ENCODE measurements at regions of chr18 and their contacts with region 1.

Region 1: DNA sequence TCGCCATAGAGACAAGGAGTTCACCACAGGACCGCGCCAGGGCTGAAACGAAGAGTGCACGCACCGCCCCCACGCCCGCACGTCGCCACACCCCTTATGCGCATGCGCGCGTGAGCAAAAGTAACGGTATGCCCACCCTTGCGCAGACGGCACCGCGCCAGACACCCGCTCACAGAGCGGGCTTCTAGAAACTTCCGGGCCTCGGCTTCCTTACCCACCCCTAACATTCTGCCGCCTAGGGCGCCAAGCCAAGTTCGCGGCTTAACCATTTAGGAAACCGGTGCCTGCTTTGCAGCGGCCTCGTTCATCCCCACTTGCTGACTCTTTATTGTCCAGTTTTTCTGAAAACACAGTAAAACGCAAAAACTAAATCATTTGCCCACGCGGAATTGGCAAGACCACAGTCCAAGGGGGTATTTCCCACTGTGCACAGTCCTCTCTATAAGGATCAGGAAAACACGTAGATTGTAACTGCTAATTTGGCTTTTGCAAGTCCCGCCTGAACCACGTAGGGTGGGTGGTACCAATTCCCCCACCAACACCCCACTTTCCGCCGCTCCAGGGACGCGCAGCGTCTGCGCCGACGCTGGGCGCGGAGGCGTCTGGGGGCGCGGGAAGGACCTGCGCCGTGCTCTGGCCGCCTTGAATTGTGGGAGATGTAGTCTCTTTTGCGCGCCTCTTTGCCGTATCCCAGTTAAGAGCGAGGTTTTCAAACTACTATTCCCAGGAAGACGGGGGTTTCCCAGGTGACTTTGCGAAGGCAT is at the starts of genes FBXO15 and TIMM21:
- DNase-seq: peak; percentile 93 to 99
- ATAC-seq: peak; percentile 84 to 93 (median 85)
- H3K4me3 ChIP-seq: peak within 1 kb of the TSS; percentile 84
- H3K4me3 Mint-ChIP-seq: peak within 1 kb of the TSS; percentile 97
- H3K27ac ChIP-seq: peak within 1 kb of the TSS; percentile 96
- H3K27ac Mint-ChIP-seq: peak within 1 kb of the TSS; percentile 98 to 100
- H3K4me1 ChIP-seq: peaks cover 15% of the 10 kb centered on the region
- H3K4me1 Mint-ChIP-seq: peaks cover 36% of the 10 kb centered on the region in 2 donors
- H3K27me3 ChIP-seq: no peaks in the 10 kb centered on the region
- H3K27me3 Mint-ChIP-seq: peaks cover 6 to 7% of the 10 kb centered on the region in 2 donors
- CTCF ChIP-seq: no peak
- total RNA-seq, gene FBXO15: 0.50 to 2.6 (median 0.87) TPM
- total RNA-seq, gene TIMM21: 13.1 to 17.3 (median 16.1) TPM

Region 2: DNA sequence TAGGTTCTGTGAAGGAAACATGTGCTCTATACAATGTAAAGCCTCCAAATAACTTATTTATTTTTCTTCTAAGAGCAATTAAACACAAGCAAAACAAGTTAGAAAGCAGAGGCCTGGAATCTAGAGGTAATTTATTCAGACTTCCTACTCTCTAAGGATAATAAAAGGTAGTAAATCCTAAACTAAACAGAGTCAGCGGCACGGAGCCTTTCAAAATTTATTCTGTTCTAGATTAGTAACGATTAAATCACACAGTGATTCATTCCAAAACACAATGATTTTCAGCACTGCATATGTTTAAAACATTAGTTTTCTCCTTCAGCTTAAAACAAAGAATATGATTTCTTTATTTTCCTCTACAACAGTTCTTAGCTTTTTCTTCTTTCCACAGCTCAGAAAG is 161.2 kb before region 1 on chr18:
- intact Hi-C with region 1: no loop called
- DNase-seq: no peak
- ATAC-seq: no peak
- H3K4me3 ChIP-seq: no peak overlapping the region
- H3K4me3 Mint-ChIP-seq: no peak overlapping the region
- H3K27ac ChIP-seq: no peak overlapping the region
- H3K27ac Mint-ChIP-seq: no peak overlapping the region
- H3K4me1 ChIP-seq: no peaks in the 10 kb centered on the region
- H3K4me1 Mint-ChIP-seq: no peaks in the 10 kb centered on the region
- H3K27me3 ChIP-seq: no peaks in the 10 kb centered on the region
- H3K27me3 Mint-ChIP-seq: no peaks in the 10 kb centered on the region
- CTCF ChIP-seq: no peak

Region 3: GRCh38 chr18:74291771-74292540 is 144.0 kb after region 1 on chr18 and contains the start of gene CYB5A:
- intact Hi-C with region 1: loop called (anchors 1 kb)
- DNase-seq: peak; percentile 99 to 100
- ATAC-seq: peak; percentile 95 to 100 (median 96)
- H3K4me3 ChIP-seq: peak within 1 kb of the TSS; percentile 95
- H3K4me3 Mint-ChIP-seq: no peak within 1 kb of the TSS
- H3K27ac ChIP-seq: peak within 1 kb of the TSS; percentile 43
- H3K27ac Mint-ChIP-seq: peak within 1 kb of the TSS; percentile 85 to 95
- H3K4me1 ChIP-seq: peaks cover 13% of the 10 kb centered on the region
- H3K4me1 Mint-ChIP-seq: peaks cover 5 to 8% of the 10 kb centered on the region in 2 donors
- H3K27me3 ChIP-seq: no peaks in the 10 kb centered on the region
- H3K27me3 Mint-ChIP-seq: no peaks in the 10 kb centered on the region
- CTCF ChIP-seq: no peak
- total RNA-seq, gene CYB5A: 10.4 to 14.6 (median 13.0) TPM

Region 4: DNA sequence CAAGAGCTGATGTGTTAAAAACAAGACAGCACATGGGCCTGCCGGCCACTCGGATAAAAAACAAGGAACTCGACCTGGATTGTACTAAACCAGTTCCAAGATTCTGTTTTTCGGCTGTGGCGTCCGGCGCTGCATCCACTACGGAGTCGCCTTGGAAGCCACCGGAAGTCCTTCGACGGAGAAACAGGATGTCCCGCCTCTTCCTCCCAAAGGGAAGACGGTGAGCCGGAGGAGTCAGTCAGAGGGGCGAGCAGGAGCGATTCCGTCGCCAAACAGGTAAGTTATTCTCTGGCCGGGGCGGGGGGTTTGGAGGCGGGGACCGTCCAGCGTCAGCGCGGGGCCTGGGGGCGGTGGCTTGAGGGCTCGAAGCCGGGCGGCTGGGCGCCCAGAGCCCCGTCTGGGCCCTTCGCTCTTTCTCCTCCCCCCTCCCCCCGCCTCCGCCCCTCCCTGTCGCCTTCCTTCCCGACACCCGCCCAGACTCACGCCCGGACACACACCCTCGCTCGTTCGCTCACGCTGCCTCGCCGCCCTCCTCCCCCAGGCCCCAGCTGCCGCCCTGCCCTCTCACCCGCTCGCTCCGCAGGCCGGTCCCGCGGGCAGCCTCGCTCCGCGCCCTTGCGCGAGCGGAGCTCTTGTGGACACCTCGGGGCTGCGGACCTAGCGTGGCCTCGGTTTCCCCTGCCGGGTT is 449.8 kb after region 1 on chr18 and contains the start of gene ZNF407:
- intact Hi-C with region 1: loop called (anchors 1 kb)
- DNase-seq: peak; percentile 85 to 94
- ATAC-seq: peak; percentile 72 to 88 (median 78)
- H3K4me3 ChIP-seq: peak within 1 kb of the TSS; percentile 95
- H3K4me3 Mint-ChIP-seq: peak within 1 kb of the TSS; percentile 93
- H3K27ac ChIP-seq: peak within 1 kb of the TSS; percentile 96
- H3K27ac Mint-ChIP-seq: peak within 1 kb of the TSS; percentile 94 to 95
- H3K4me1 ChIP-seq: peaks cover 14% of the 10 kb centered on the region
- H3K4me1 Mint-ChIP-seq: peaks cover 58 to 65% of the 10 kb centered on the region in 2 donors
- H3K27me3 ChIP-seq: no peaks in the 10 kb centered on the region
- H3K27me3 Mint-ChIP-seq: no peaks in the 10 kb centered on the region
- CTCF ChIP-seq: no peak
- total RNA-seq, gene ZNF407: 28.4 to 36.7 (median 36.3) TPM